ENCODE measurements at regions of chr17 and their contacts with region 1.

Region 1: DNA sequence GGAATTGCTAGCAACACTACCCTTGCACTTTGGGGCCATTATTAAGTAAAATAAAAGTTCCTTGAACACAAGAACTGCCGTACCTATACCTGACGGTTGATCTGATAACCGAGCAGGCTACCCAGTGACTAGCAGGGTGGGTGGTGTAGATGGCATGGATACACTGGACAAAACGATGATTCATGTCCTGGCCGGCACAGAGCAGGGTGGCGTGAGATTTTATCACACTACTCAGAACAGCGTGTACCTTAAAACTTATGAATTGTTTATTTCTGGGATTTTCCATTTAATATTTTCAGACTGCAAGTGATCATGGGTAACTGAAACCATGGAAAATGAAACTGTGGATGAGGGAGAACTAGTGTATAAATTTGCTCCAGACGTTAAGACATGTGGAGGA is 41.0 kb upstream of the MSI2 start:
- DNase-seq: peak; percentile 92
- H3K4me3 Mint-ChIP-seq: peak overlapping the region; percentile 46
- H3K27ac Mint-ChIP-seq: peak overlapping the region; percentile 96
- H3K4me1 Mint-ChIP-seq: peaks cover 43% of the 10 kb centered on the region
- H3K27me3 Mint-ChIP-seq: no peaks in the 10 kb centered on the region
- CTCF ChIP-seq: no peak

Region 2: GRCh38 chr17:57092171-57092570 is 123.1 kb before region 1 on chr17:
- CTCF ChIA-PET with region 1: no interaction called
- POLR2A ChIA-PET with region 1: no interaction called
- intact Hi-C with region 1: no loop called
- DNase-seq: no peak
- H3K4me3 Mint-ChIP-seq: no peak overlapping the region
- H3K27ac Mint-ChIP-seq: no peak overlapping the region
- H3K4me1 Mint-ChIP-seq: peaks cover 35% of the 10 kb centered on the region
- H3K27me3 Mint-ChIP-seq: no peaks in the 10 kb centered on the region
- CTCF ChIP-seq: no peak

Region 3: GRCh38 chr17:57166717-57167198 is 48.6 kb before region 1 on chr17:
- CTCF ChIA-PET with region 1: no interaction called
- POLR2A ChIA-PET with region 1: interaction called, 10 read pairs
- intact Hi-C with region 1: no loop called
- DNase-seq: peak; percentile 62
- H3K4me3 Mint-ChIP-seq: no peak overlapping the region
- H3K27ac Mint-ChIP-seq: no peak overlapping the region
- H3K4me1 Mint-ChIP-seq: peaks cover 7% of the 10 kb centered on the region
- H3K27me3 Mint-ChIP-seq: no peaks in the 10 kb centered on the region
- CTCF ChIP-seq: no peak

Region 4: GRCh38 chr17:57255776-57256681 is 40.7 kb after region 1 on chr17 and contains the start of gene MSI2:
- CTCF ChIA-PET with region 1: interaction called, 4 read pairs
- POLR2A ChIA-PET with region 1: interaction called, 15 read pairs
- intact Hi-C with region 1: no loop called
- DNase-seq: peak; percentile 83
- H3K4me3 Mint-ChIP-seq: peak within 1 kb of the TSS; percentile 96
- H3K27ac Mint-ChIP-seq: peak within 1 kb of the TSS; percentile 89
- H3K4me1 Mint-ChIP-seq: peaks cover 18% of the 10 kb centered on the region
- H3K27me3 Mint-ChIP-seq: no peaks in the 10 kb centered on the region
- CTCF ChIP-seq: no peak
- total RNA-seq, gene MSI2: 52.4 and 60.6 TPM in 2 replicates

Region 5: DNA sequence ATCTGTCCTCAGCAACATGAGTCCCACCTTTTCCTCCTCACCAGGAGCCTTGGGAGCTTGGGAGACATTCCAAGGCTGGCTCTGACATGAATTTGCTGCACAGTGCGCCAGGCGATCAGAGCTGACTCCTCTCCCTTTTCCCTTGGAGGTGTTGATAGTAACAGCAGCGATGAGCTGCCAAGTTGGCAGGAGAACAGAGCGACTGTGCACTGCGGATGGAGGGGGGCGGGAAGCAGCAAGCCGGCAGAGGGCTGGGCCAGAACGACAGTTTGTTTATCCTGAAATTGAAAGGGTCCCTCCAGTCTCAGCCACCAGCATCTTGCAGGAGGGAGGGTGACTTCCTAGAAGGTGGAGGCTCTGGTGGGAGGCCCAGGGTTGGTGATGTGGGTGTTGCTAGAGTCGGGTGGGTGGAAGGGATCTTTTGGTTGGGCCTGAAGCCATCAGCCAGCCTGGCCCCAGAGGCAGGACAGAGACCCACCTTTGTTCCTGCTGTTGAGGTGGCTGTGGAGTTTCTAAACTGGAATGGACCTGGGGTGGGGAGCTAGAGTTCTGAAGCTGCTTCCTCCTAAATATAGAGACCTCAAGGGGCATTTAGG is 845.4 kb after region 1 on chr17:
- CTCF ChIA-PET with region 1: no interaction called
- POLR2A ChIA-PET with region 1: no interaction called
- intact Hi-C with region 1: no loop called
- DNase-seq: peak; percentile 22
- H3K4me3 Mint-ChIP-seq: no peak overlapping the region
- H3K27ac Mint-ChIP-seq: no peak overlapping the region
- H3K4me1 Mint-ChIP-seq: no peaks in the 10 kb centered on the region
- H3K27me3 Mint-ChIP-seq: peaks cover 47% of the 10 kb centered on the region
- CTCF ChIP-seq: no peak